ENCODE measurements at regions of chr16 and their contacts with region 1.

Region 1: DNA sequence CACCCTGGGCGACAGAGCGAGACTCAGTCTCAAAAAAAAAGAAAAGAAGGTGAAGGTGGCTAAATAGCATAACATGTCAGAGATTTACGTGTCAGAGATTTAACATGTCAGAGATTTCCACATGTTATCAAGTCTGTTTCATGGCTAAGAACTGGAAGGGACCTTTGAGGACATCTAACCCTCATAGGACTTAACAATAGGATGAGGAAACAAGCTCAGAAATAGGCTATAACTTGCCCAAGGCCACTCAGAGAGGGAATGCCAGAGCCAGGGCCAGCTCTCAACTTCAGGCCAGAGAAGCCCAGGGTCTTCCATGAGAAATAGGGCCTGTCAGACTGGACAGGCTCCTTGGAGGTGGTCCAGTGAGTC is 26.8 kb upstream of the ZNF629 start:
- DNase-seq: no peak
- ATAC-seq: peak in 1 of 2 donors; percentile 19
- H3K4me3 Mint-ChIP-seq: peak overlapping the region; percentile 77 to 88 (median 84)
- H3K27ac Mint-ChIP-seq: peak overlapping the region; percentile 80 to 95 (median 92)
- H3K4me1 Mint-ChIP-seq: peaks cover 8 to 17% (median 14%) of the 10 kb centered on the region in 4 donors
- H3K27me3 Mint-ChIP-seq: peaks cover 0 to 2% (median 0%) of the 10 kb centered on the region in 5 donors

Region 2: GRCh38 chr16:30692381-30693064 is 121.3 kb before region 1 on chr16:
- POLR2A ChIA-PET with region 1: no interaction called
- DNase-seq: no peak
- ATAC-seq: no peak
- H3K4me3 Mint-ChIP-seq: no peak overlapping the region
- H3K27ac Mint-ChIP-seq: peak overlapping the region in 5 of 10 donors; percentile 11 to 61 (median 52)
- H3K4me1 Mint-ChIP-seq: peaks cover 7 to 24% (median 19%) of the 10 kb centered on the region in 4 donors
- H3K27me3 Mint-ChIP-seq: no peaks in the 10 kb centered on the region

Region 3: GRCh38 chr16:30747799-30748634 is 65.8 kb before region 1 on chr16 and contains the start of gene PHKG2:
- POLR2A ChIA-PET with region 1: interaction called, 10 read pairs
- DNase-seq: peak; percentile 89 to 97 (median 94)
- ATAC-seq: peak; percentile 97
- H3K4me3 Mint-ChIP-seq: peak within 1 kb of the TSS; percentile 84 to 95 (median 91)
- H3K27ac Mint-ChIP-seq: peak within 1 kb of the TSS; percentile 81 to 94 (median 91)
- H3K4me1 Mint-ChIP-seq: peaks cover 20 to 36% (median 27%) of the 10 kb centered on the region in 4 donors
- H3K27me3 Mint-ChIP-seq: no peaks in the 10 kb centered on the region
- polyA plus RNA-seq, gene PHKG2: 39.7 to 43.1 (median 40.6) TPM

Measured in naive thymus-derived CD8-positive, alpha-beta T cell (primary cell).